Endothelial cell of umbilical vein (primary cell): ENCODE measurements at regions of chrX and their contacts with region 1.

Region 1: GRCh38 chrX:103629318-103630170 is 769 bp downstream of the TCEAL1 start:
- DNase-seq: peak; percentile 78
- H3K4me3 ChIP-seq: peak overlapping the region; percentile 32 to 88 (median 80)
- H3K27ac ChIP-seq: peak overlapping the region; percentile 78
- H3K4me1 ChIP-seq: peaks cover 23% of the 10 kb centered on the region
- H3K27me3 ChIP-seq: no peaks in the 10 kb centered on the region
- CTCF ChIP-seq: peak; percentile 44 to 64
- POLR2A ChIP-seq: peak; percentile 82

Region 2: GRCh38 chrX:103513476-103514108 is 116.0 kb before region 1 on chrX:
- CTCF ChIA-PET with region 1: no interaction called
- POLR2A ChIA-PET with region 1: no interaction called
- dilution Hi-C with region 1: no loop called
- intact Hi-C with region 1: no loop called
- DNase-seq: no peak
- H3K4me3 ChIP-seq: no peak overlapping the region
- H3K27ac ChIP-seq: no peak overlapping the region
- H3K4me1 ChIP-seq: no peaks in the 10 kb centered on the region
- H3K27me3 ChIP-seq: no peaks in the 10 kb centered on the region
- CTCF ChIP-seq: no peak
- POLR2A ChIP-seq: no peak

Region 3: GRCh38 chrX:103533511-103534216 is 95.9 kb before region 1 on chrX:
- CTCF ChIA-PET with region 1: interaction called, 19 read pairs
- POLR2A ChIA-PET with region 1: interaction called, 4 read pairs
- dilution Hi-C with region 1: no loop called
- intact Hi-C with region 1: loop called (anchors 1 kb)
- DNase-seq: peak; percentile 69
- H3K4me3 ChIP-seq: peak overlapping the region in 1 of 3 experiments; percentile 5
- H3K27ac ChIP-seq: no peak overlapping the region
- H3K4me1 ChIP-seq: no peaks in the 10 kb centered on the region
- H3K27me3 ChIP-seq: no peaks in the 10 kb centered on the region
- CTCF ChIP-seq: peak; percentile 61 to 62
- POLR2A ChIP-seq: no peak

Region 4: DNA sequence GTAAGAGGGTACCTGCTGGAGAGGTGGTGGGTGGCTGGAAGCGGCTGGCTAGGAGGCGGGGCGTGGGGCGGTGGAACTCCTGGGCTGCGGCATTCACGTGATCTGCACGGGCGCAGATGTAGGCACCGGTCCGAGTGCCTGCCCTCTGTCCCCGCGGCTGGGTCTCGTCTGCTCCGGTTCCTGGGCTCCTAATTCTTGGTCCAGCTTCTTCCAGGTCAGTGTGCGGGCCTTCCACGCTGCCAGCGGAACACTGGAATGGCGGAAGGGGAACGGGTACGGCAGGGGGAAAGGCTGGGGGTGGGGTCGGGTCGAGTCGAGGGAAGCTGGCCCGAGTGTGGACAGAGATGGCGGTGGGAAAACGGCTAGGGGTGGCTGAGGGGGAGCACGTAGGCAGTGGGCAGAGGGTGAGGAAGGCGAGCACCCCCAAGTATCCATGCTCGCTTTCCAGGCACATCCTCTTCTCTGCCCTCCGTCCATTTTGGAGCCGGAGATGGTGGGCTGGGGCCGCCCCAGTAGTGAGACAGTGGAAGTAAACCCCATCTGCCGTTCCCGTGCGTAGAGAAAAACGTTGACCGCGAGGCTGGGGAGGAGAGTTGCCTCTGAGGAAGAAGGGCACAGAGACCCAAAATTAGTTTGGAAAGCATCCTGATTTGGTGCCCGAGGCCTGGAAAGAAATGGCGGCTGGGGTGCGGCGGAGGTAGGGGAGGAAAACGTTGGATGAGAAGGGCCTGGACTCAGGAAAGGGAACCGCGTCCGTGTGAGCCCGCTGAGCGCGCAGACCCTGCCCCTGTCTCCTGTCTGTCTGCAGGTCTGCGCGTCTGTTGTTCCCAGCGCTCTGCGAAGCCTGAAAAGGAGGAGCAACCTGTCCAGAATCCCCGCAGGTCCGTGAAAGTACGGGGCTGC is 43.9 kb before region 1 on chrX and contains the start of gene TCEAL4:
- CTCF ChIA-PET with region 1: no interaction called
- POLR2A ChIA-PET with region 1: no interaction called
- dilution Hi-C with region 1: no loop called
- intact Hi-C with region 1: loop called (anchors 1 kb)
- DNase-seq: peak; percentile 36
- H3K4me3 ChIP-seq: peak within 1 kb of the TSS; percentile 63 to 87 (median 68)
- H3K27ac ChIP-seq: peak within 1 kb of the TSS; percentile 32
- H3K4me1 ChIP-seq: no peaks in the 10 kb centered on the region
- H3K27me3 ChIP-seq: no peaks in the 10 kb centered on the region
- CTCF ChIP-seq: no peak
- POLR2A ChIP-seq: peak; percentile 30
- total RNA-seq, gene TCEAL4: 60.4 and 74.6 TPM in 2 replicates

Region 5: GRCh38 chrX:103607364-103608305 is 21.9 kb before region 1 on chrX and contains the start of gene TCEAL3:
- CTCF ChIA-PET with region 1: interaction called, 11 read pairs
- POLR2A ChIA-PET with region 1: interaction called, 3 read pairs
- dilution Hi-C with region 1: no loop called
- intact Hi-C with region 1: loop called (anchors 2 kb)
- DNase-seq: peak; percentile 45
- H3K4me3 ChIP-seq: peak within 1 kb of the TSS; percentile 56 to 83 (median 75)
- H3K27ac ChIP-seq: peak within 1 kb of the TSS; percentile 77
- H3K4me1 ChIP-seq: peaks cover 5% of the 10 kb centered on the region
- H3K27me3 ChIP-seq: no peaks in the 10 kb centered on the region
- CTCF ChIP-seq: no peak
- POLR2A ChIP-seq: no peak
- total RNA-seq, gene TCEAL3: 21.3 and 23.7 TPM in 2 replicates

Region 6: GRCh38 chrX:103644125-103644524 is 14.6 kb after region 1 on chrX:
- CTCF ChIA-PET with region 1: interaction called, 15 read pairs
- POLR2A ChIA-PET with region 1: interaction called, 11 read pairs
- dilution Hi-C with region 1: no loop called
- intact Hi-C with region 1: no loop called
- DNase-seq: no peak
- H3K4me3 ChIP-seq: no peak overlapping the region
- H3K27ac ChIP-seq: no peak overlapping the region
- H3K4me1 ChIP-seq: peaks cover 7% of the 10 kb centered on the region
- H3K27me3 ChIP-seq: no peaks in the 10 kb centered on the region
- CTCF ChIP-seq: no peak
- POLR2A ChIP-seq: no peak

Region 7: DNA sequence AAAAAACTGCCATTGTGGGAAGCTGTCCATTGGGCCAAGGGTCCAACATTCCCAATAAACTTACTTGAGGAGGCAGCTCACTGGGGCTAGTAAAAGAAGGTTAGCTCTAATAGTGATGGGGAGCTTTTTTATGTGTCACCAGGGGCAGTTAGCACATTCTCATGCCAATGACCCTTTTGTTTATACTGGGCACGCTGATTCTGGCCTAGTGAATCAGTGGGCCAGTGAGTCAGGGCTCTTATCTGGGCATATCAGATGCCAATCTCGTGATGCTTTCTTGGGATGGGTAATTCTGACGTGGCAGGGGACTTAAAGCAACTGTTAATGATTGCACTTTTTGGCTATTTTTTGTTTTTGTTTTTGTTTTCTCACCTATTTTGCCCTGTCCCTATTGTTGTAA is 27.1 kb after region 1 on chrX:
- CTCF ChIA-PET with region 1: interaction called, 12 read pairs
- POLR2A ChIA-PET with region 1: no interaction called
- dilution Hi-C with region 1: no loop called
- intact Hi-C with region 1: no loop called
- DNase-seq: peak; percentile 59
- H3K4me3 ChIP-seq: no peak overlapping the region
- H3K27ac ChIP-seq: peak overlapping the region; percentile 44
- H3K4me1 ChIP-seq: peaks cover 15% of the 10 kb centered on the region
- H3K27me3 ChIP-seq: no peaks in the 10 kb centered on the region
- CTCF ChIP-seq: no peak
- POLR2A ChIP-seq: no peak